Left cardiac atrium (tissue), 4 donors: ENCODE measurements at regions of chr4 and their contacts with region 1.

Region 1: GRCh38 chr4:83639849-83640493 is 104.1 kb downstream of the GPAT3 start:
- DNase-seq: no peak
- ATAC-seq: peak; percentile 82 to 88

Region 2: DNA sequence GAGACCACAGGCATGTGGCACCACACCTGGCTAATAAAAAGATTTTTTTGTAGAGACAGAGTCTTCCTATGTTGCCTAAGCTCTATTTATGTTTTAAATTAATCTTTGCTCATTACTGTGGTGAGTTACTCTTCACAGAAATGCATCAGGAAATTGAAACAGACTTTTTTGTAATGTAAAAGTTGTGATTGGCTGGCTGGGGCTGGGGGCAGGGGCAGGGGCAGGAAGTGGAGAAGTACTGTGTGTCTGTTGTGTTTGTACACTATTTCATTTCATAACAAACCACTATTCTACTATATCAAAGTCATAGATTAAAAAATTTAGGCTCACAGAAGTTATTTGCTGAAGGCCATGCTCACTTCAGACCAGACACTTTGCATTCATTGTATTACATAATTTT is 136.0 kb before region 1 on chr4:
- intact Hi-C with region 1: loop called (anchors 2 to 5 kb)
- DNase-seq: no peak
- ATAC-seq: no peak

Region 3: DNA sequence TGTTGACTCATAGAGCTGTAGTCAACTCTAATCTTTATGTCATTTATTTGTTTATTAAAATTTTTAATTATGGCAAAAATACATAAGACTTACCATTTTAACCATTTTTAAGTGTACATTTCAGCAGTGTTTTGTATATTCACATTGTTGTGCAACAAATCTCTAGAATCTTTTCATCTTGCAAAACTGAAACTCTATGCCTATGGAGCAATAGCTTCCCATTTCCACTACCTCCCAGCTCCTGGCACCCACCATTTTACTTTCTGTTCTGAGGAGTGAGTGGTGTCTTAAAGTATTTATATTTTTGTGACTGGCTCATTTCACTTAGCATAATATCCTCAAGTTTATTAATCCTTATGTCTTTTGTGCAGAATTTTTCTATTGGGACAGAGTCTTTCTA is 76.9 kb after region 1 on chr4:
- intact Hi-C with region 1: no loop called
- DNase-seq: no peak
- ATAC-seq: no peak

Region 4: GRCh38 chr4:83846193-83846830 is 206.3 kb after region 1 on chr4:
- intact Hi-C with region 1: loop called in 1 of 2 experiments (anchors 10 kb)
- DNase-seq: no peak
- ATAC-seq: peak in 1 of 2 donors; percentile 79

Region 5: DNA sequence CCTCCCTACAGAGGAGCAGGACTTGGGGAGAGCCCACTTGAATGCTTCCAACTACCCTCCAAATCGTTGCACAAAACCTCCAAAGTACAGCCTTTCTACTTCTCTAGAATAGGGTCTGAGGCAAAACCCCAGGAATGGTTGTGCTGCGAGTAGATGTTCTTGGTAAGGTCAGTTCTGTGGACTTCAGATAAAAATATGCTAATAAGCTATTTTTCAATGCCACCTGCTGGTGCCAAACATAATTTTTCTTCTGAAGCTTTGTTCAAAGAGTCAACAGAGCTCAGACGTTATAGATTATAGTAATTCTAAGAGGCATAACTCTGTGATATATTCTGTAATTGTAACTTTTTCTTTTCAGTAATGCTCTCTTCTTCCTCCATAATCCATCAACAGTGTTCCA is 321.6 kb after region 1 on chr4:
- intact Hi-C with region 1: loop called in 1 of 2 experiments (anchors 5 kb)
- DNase-seq: no peak
- ATAC-seq: peak in 1 of 2 donors; percentile 27

Region 6: GRCh38 chr4:84529169-84529751 is 889.3 kb after region 1 on chr4:
- intact Hi-C with region 1: loop called in 1 of 2 experiments (anchors 5 kb)
- DNase-seq: no peak
- ATAC-seq: no peak